WTC11 (cell line): ENCODE measurements at regions of chr1 and their contacts with region 1.

Region 1: DNA sequence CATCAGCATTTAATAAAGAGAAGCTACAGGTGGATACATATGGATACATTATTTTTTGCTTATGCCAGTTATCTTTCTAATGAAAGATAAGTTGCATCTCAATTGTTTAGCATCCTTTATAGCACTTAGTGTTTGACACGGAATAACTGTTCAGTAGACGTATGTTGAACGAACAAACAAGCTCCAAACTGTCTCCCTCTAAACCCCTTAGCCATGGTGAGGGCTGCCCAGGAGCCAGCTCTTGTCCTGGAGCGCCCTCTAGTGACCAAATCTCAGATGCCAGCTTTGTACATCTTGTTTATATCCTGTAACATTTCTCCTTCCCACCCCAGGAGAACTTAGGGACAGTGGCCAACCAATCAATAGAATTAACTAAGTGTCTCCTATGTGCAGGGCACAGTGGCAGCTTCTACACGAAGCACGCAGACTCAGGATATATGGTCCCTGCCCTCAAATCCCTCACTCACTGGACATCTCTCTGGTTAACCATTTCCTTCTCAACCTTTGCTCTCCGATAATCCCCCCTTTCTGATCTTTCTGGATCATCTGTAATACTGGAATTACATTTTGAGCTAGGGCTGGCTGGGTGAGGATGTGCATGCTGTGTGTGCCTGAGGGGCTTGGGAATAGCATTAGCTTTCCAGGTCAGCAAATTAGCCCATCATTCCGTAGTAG is 22.9 kb downstream of the KCNA10 start:
- DNase-seq: peak; percentile 88
- ATAC-seq: peak; percentile 79
- H3K4me3 Mint-ChIP-seq: no peak overlapping the region
- H3K27ac Mint-ChIP-seq: no peak overlapping the region
- H3K4me1 Mint-ChIP-seq: peaks cover 23% of the 10 kb centered on the region
- H3K27me3 Mint-ChIP-seq: peaks cover 2% of the 10 kb centered on the region; the same call in 1 of the 2 replicates
- CTCF ChIP-seq: peak; percentile 84

Region 2: DNA sequence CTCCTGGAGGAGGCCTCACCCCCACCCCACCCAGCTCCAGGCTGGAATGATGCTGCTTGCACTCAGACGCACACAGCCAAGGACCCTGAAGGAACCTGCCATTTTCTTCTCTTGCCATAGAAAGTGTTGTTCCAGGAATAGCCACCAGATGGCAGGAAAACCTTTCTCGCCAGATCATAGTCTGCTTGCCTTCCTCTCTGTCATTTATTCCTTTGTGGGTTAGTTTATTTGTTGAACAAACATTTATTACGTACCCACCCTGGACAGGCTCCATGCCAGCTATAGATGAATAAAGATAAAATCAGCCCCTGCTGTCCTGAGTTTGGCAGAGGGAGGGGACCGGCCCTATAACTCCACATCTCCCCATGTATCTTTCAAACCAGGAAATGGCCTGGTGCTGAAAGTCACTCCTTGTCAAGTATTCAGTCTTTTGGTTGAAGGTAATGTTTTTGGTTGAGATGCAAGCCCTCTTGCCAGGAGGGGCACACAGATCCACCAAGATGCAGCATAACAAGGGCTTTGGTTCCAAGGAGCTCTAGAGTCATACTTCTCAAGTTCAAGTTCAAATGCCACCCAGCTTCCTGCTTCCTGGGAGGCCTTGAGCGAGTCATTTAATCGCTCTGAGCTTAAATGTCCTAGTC is 292.9 kb before region 1 on chr1:
- CTCF ChIA-PET with region 1: interaction called, 96 read pairs
- POLR2A ChIA-PET with region 1: interaction called, 4 read pairs
- DNase-seq: peak; percentile 62
- ATAC-seq: peak; percentile 56
- H3K4me3 Mint-ChIP-seq: no peak overlapping the region
- H3K27ac Mint-ChIP-seq: no peak overlapping the region
- H3K4me1 Mint-ChIP-seq: peaks cover 4% of the 10 kb centered on the region
- H3K27me3 Mint-ChIP-seq: no peaks in the 10 kb centered on the region
- CTCF ChIP-seq: peak; percentile 74

Region 3: GRCh38 chr1:110407260-110408210 is 88.5 kb before region 1 on chr1 and contains the start of gene LAMTOR5:
- CTCF ChIA-PET with region 1: interaction called, 106 read pairs
- POLR2A ChIA-PET with region 1: no interaction called
- DNase-seq: peak; percentile 87
- ATAC-seq: peak; percentile 89
- H3K4me3 Mint-ChIP-seq: peak within 1 kb of the TSS; percentile 97
- H3K27ac Mint-ChIP-seq: peak within 1 kb of the TSS; percentile 98
- H3K4me1 Mint-ChIP-seq: peaks cover 14% of the 10 kb centered on the region
- H3K27me3 Mint-ChIP-seq: 0 out of 2 replicates have a peak, but pooled peaks cover 2% of the 10 kb centered on the region
- CTCF ChIP-seq: no peak
- total RNA-seq, gene LAMTOR5: 76.0 to 106 TPM (median 93.0 TPM) in 3 replicates

Region 4: DNA sequence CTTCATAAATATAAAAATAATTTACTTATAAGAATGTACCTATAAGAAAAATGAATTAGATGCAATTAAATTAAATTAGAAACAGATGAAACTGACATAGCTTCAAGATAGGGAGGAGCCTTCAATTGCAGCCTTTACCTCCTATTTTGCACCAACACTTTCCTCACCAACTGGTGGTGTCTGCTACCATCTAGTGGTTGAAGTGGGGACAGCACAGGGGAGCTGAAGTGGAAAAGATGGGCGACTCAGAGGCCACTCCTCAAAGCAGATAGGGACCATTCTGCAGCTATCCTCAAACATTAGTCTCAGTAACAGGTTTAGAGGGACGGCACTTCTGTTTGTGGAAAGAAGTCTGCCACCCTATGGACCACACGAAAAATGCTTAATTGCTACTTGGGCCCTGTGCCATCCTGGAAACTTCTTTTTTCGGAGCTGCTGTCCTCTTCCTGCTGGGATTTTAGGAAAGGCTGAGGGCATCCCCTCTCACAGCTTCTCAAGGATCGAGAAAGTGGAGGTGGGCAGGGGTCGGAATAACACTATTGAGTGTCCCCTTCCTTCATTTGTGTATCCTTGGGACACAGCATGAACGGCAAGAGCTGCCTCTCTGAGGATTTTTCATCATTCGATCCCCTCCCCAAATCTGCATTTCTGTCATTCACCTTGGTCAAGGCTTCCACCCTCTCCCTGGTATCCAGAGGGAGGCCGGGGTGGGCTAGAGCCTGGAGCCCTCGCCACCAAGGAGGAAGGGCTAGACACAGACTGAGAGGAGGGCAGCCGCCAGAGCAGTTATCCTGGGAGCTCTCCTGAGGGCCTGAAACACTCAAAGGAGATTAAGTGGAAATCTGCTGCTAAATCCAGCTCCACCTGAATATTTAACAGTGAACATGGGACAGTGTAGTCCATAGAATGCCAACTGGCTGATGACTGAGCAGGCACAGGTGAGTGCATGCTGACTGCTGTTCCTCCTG is 35.5 kb before region 1 on chr1:
- CTCF ChIA-PET with region 1: interaction called, 124 read pairs
- POLR2A ChIA-PET with region 1: interaction called, 3 read pairs
- DNase-seq: peak; percentile 88
- ATAC-seq: peak; percentile 87
- H3K4me3 Mint-ChIP-seq: no peak overlapping the region
- H3K27ac Mint-ChIP-seq: no peak overlapping the region
- H3K4me1 Mint-ChIP-seq: no peaks in the 10 kb centered on the region
- H3K27me3 Mint-ChIP-seq: no peaks in the 10 kb centered on the region; the same call in 1 of the 2 replicates
- CTCF ChIP-seq: peak; percentile 81

Region 5: DNA sequence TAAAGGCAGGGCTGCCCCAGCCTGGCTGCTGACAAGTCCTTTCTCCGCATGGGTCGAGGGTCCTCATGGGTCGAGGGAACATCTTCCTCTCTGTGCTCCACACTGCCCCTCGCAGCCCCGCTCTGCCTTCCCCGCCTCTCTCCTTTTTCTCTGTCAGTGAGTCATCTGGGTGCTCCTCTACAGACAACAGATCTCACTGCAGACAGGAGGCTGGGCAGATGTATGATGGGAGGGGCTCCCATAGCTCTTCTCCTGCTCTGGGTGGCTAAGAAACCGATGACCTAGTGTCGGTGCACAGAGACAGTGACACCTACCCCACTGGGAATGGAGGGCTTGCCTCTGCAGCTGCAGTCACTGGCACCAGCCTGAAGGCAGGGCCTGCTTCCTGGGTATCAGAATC is 17.4 kb after region 1 on chr1:
- CTCF ChIA-PET with region 1: interaction called, 17 read pairs
- POLR2A ChIA-PET with region 1: no interaction called
- DNase-seq: no peak
- ATAC-seq: peak; percentile 91
- H3K4me3 Mint-ChIP-seq: no peak overlapping the region
- H3K27ac Mint-ChIP-seq: no peak overlapping the region; the same call in 1 of the 2 replicates
- H3K4me1 Mint-ChIP-seq: peaks cover 22% of the 10 kb centered on the region
- H3K27me3 Mint-ChIP-seq: peaks cover 3% of the 10 kb centered on the region; the same call in 1 of the 2 replicates
- CTCF ChIP-seq: no peak

Region 6: GRCh38 chr1:110548381-110548780 is 52.3 kb after region 1 on chr1:
- CTCF ChIA-PET with region 1: no interaction called
- POLR2A ChIA-PET with region 1: no interaction called
- DNase-seq: peak; percentile 52
- ATAC-seq: peak; percentile 92
- H3K4me3 Mint-ChIP-seq: no peak overlapping the region
- H3K27ac Mint-ChIP-seq: no peak overlapping the region
- H3K4me1 Mint-ChIP-seq: no peaks in the 10 kb centered on the region; the same call in 1 of the 2 replicates
- H3K27me3 Mint-ChIP-seq: peaks cover 17% of the 10 kb centered on the region
- CTCF ChIP-seq: no peak; the same call in 1 of the 2 replicates

Region 7: DNA sequence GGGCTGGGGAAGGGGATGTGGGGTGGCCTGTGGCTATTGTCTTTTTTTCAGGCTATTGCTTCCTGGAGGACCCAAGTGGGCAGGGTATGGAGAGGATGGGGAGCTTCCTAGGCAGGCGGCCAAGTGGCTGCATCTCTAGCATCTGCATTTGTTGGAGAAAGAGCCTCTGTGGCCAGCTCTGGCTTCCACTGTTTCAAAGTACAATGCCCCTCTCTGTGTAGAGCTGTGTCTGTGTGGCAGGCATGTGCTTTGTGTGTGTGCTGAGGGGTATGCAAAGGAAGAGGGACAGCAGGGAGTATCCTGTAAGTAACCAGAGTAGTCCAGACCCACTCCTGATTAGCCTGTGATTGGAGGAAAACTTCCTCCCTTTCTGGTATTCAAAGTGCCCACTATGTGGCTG is 69.5 kb after region 1 on chr1:
- CTCF ChIA-PET with region 1: no interaction called
- POLR2A ChIA-PET with region 1: no interaction called
- DNase-seq: no peak
- ATAC-seq: peak; percentile 67
- H3K4me3 Mint-ChIP-seq: no peak overlapping the region
- H3K27ac Mint-ChIP-seq: no peak overlapping the region
- H3K4me1 Mint-ChIP-seq: peaks cover 10% of the 10 kb centered on the region
- H3K27me3 Mint-ChIP-seq: peaks cover 21% of the 10 kb centered on the region
- CTCF ChIP-seq: no peak

Region 8: GRCh38 chr1:110605901-110606656 is 110.0 kb after region 1 on chr1 and contains the start of gene KCNA2:
- CTCF ChIA-PET with region 1: interaction called, 23 read pairs
- POLR2A ChIA-PET with region 1: no interaction called
- DNase-seq: peak; percentile 68
- ATAC-seq: peak; percentile 71
- H3K4me3 Mint-ChIP-seq: peak within 1 kb of the TSS; percentile 79
- H3K27ac Mint-ChIP-seq: no peak within 1 kb of the TSS
- H3K4me1 Mint-ChIP-seq: peaks cover 15% of the 10 kb centered on the region
- H3K27me3 Mint-ChIP-seq: peaks cover 79% of the 10 kb centered on the region
- CTCF ChIP-seq: no peak
- total RNA-seq, gene KCNA2: 0.41 to 0.87 TPM (median 0.50 TPM) in 3 replicates

Region 9: GRCh38 chr1:110734133-110734680 is 238.1 kb after region 1 on chr1:
- CTCF ChIA-PET with region 1: no interaction called
- POLR2A ChIA-PET with region 1: no interaction called
- DNase-seq: no peak
- ATAC-seq: no peak
- H3K4me3 Mint-ChIP-seq: no peak overlapping the region
- H3K27ac Mint-ChIP-seq: no peak overlapping the region
- H3K4me1 Mint-ChIP-seq: peaks cover 25% of the 10 kb centered on the region
- H3K27me3 Mint-ChIP-seq: peaks cover 54% of the 10 kb centered on the region
- CTCF ChIP-seq: no peak